IMR-90 (cell line): ENCODE measurements at regions of chr5 and their contacts with region 1.

Region 1: DNA sequence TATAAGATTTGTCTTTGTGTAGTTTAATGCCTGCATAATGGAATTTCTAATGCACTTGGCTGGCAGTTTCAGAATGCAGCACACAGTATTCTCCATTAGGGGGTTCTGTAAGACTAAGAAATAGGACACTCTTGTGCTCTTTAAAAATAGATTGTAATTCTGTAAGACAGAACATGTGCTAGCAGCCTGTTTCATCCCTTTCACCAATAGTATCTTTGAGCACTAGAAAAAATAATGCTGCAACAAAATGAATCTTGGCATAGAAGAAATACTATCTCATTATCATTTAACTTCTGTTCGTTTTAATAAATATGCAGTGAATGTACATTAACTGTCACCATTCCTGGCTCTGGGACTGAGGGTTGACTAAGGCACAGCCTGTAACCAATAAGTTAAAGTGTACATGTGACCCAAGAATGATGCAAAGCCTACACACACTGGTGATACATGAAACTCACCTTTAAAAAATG is 23.8 kb upstream of the ZNF622 start:
- DNase-seq: peak; percentile 64
- ATAC-seq: peak; percentile 99
- H3K4me3 ChIP-seq: no peak overlapping the region
- H3K27ac ChIP-seq: no peak overlapping the region
- H3K4me1 ChIP-seq: no peaks in the 10 kb centered on the region
- H3K27me3 ChIP-seq: peaks cover 30% of the 10 kb centered on the region
- CTCF ChIP-seq: peak; percentile 86
- POLR2A ChIP-seq: 0 out of 2 replicates have a peak, but pooled peaks have one; percentile 20
- RAD21 ChIP-seq: peak; percentile 82

Region 2: DNA sequence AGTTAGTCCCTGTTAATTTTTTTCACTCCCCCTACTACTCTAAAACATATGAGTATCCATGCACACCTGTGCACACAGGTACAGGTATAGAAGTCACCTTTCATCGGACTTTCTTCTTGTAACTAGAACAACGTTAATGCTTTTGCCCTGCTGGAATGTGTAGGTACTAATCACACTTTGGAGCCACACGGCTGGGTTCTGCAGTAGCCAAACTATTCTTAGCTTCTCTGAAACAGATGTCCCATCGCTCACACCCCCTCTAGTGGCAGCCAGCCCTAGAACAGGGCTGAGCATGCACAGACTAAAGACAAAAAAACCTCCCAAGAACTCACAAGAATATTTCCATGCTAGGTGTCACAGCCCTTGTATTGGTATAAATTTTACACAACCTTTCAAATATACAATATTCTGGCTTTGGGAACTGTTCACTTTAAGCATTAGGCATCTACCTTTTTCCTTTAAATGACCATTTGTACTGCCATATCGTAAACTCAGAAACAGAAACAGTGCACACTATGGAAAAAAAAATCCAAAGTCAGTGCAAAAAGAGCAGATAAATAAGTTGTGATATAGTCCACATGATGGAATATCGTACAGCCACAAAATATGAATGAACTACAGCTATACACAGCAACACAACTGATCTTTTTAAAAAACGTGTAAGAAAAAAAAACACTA is 63.4 kb after region 1 on chr5:
- CTCF ChIA-PET with region 1: interaction called, 11 read pairs
- POLR2A ChIA-PET with region 1: no interaction called
- dilution Hi-C with region 1: no loop called
- in situ Hi-C with region 1: no loop called
- intact Hi-C with region 1: loop called (anchors 1 kb)
- DNase-seq: peak; percentile 55
- ATAC-seq: peak; percentile 98
- H3K4me3 ChIP-seq: no peak overlapping the region
- H3K27ac ChIP-seq: no peak overlapping the region
- H3K4me1 ChIP-seq: no peaks in the 10 kb centered on the region
- H3K27me3 ChIP-seq: peaks cover 11% of the 10 kb centered on the region
- CTCF ChIP-seq: peak; percentile 73
- POLR2A ChIP-seq: no peak
- RAD21 ChIP-seq: peak; percentile 62

Region 3: DNA sequence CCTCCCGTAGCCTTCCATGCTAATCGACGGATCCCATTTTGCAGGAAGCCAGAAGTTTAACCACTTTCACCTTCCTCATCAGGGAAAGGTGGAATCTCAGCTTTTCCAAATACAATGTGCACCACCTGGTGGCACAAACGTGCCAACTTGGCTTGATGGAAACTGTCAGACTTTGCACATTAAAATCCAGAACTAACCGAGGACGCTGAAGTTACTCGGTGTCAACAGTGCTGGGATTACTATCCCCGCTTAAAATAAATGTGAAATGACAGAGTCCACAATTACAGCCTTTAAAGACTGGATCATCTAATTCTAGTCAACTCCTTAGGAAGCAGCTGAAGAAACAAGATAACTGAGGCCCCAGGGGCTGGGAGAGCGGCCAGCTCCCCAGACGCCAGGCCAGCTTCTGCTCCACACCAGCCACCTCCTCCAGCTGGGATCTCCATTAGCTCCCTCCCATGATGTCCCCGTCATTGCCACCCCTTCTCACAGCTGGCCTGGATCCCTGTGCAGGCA is 177.6 kb after region 1 on chr5:
- CTCF ChIA-PET with region 1: interaction called, 3 read pairs
- POLR2A ChIA-PET with region 1: no interaction called
- dilution Hi-C with region 1: no loop called
- in situ Hi-C with region 1: loop called (anchors 10 kb)
- intact Hi-C with region 1: loop called (anchors 1 kb)
- DNase-seq: peak; percentile 15
- ATAC-seq: no peak
- H3K4me3 ChIP-seq: no peak overlapping the region
- H3K27ac ChIP-seq: no peak overlapping the region
- H3K4me1 ChIP-seq: peaks cover 16% of the 10 kb centered on the region
- H3K27me3 ChIP-seq: no peaks in the 10 kb centered on the region
- CTCF ChIP-seq: no peak
- POLR2A ChIP-seq: no peak
- RAD21 ChIP-seq: no peak

Region 4: DNA sequence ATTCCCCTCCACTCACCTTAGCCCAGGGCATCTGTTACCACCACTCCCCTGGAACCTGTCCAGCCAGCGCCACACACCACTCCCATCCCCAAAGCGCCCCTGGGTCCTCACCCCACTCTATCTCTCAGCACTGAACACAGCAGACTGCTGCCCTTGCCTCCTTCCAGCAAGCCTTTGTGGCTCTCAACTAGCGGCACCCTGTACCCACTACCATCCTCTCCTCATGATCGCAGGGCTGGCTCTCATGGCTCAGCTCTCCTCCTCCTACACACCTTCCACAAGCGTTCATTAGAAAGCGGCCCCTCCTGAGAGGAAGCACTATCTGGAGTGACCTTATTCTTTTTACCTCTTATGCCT is 714.8 kb after region 1 on chr5:
- CTCF ChIA-PET with region 1: no interaction called
- POLR2A ChIA-PET with region 1: no interaction called
- dilution Hi-C with region 1: no loop called
- in situ Hi-C with region 1: no loop called
- intact Hi-C with region 1: loop called (anchors 1 kb)
- DNase-seq: no peak
- ATAC-seq: no peak
- H3K4me3 ChIP-seq: no peak overlapping the region
- H3K27ac ChIP-seq: no peak overlapping the region
- H3K4me1 ChIP-seq: no peaks in the 10 kb centered on the region; the same call in 1 of the 2 replicates
- H3K27me3 ChIP-seq: no peaks in the 10 kb centered on the region
- CTCF ChIP-seq: no peak
- POLR2A ChIP-seq: no peak
- RAD21 ChIP-seq: no peak

Region 5: DNA sequence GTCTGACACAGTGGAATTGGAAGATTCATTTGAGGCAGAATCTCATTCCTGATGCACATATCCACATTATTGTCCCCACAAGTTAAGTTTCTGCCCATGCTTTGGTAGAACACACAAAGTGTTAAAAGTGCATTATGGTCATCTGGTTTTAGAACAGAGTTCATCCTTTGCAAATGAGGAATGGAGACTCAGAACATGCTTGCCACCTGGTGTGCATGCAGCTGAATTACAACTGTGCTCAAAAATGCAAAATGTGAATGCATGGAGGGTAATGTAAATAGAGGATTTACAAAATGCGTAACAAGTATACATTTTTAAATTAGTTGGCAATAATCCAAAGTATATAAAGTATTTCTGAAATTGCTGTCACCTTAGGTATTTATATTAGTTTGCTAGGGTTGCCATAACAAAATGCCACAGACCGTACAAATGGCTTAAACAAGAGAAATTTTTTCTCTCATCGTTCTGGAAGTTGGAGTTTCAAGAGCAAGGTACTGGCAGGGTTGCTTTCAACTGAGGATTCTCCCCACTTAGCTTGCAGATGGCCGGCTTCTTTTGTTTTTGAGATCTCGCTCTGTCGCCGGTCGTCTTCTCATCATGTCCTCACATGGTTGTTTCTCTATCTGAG is 1816.1 kb after region 1 on chr5:
- CTCF ChIA-PET with region 1: no interaction called
- POLR2A ChIA-PET with region 1: no interaction called
- dilution Hi-C with region 1: no loop called
- in situ Hi-C with region 1: loop called (anchors 25 kb)
- intact Hi-C with region 1: loop called (anchors 10 kb)
- DNase-seq: peak; percentile 39
- ATAC-seq: peak; percentile 90
- H3K4me3 ChIP-seq: no peak overlapping the region
- H3K27ac ChIP-seq: no peak overlapping the region
- H3K4me1 ChIP-seq: no peaks in the 10 kb centered on the region
- H3K27me3 ChIP-seq: no peaks in the 10 kb centered on the region
- CTCF ChIP-seq: peak; percentile 77
- POLR2A ChIP-seq: no peak
- RAD21 ChIP-seq: peak; percentile 81

Region 6: DNA sequence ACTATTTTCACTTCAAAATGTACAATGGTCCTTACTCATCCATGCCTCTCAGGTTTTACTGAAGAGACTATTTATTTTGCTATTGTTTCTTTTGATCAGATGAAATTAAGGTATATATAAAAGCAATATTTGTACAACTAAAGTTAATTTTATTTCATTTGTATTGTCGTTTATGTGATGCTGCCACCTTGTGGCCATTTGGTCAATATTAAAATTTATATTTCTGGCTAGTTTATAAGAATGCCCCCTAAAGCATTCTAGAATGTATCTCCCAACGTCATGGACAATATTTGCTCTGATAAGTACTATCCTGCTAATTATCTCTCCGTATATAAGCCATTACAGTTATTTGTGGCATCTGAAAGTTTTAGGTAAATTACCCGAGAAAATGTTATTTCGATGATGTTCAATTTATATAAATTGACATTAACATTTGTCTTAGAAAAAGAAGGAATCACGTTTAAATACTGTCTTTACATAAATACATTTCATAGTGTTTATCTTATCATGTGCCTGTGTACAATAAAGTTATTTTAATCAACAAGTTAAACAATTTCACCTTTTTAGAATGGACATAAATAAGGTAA is 1824.9 kb after region 1 on chr5:
- CTCF ChIA-PET with region 1: no interaction called
- POLR2A ChIA-PET with region 1: no interaction called
- dilution Hi-C with region 1: no loop called
- in situ Hi-C with region 1: loop called (anchors 25 kb)
- intact Hi-C with region 1: loop called (anchors 10 kb)
- DNase-seq: peak; percentile 20
- ATAC-seq: no peak
- H3K4me3 ChIP-seq: no peak overlapping the region
- H3K27ac ChIP-seq: no peak overlapping the region
- H3K4me1 ChIP-seq: no peaks in the 10 kb centered on the region
- H3K27me3 ChIP-seq: no peaks in the 10 kb centered on the region
- CTCF ChIP-seq: peak; percentile 48
- POLR2A ChIP-seq: no peak
- RAD21 ChIP-seq: peak; percentile 31; the same call in 1 of the 2 replicates